ENCODE measurements at regions of chr1 and their contacts with region 1.

Region 1: DNA sequence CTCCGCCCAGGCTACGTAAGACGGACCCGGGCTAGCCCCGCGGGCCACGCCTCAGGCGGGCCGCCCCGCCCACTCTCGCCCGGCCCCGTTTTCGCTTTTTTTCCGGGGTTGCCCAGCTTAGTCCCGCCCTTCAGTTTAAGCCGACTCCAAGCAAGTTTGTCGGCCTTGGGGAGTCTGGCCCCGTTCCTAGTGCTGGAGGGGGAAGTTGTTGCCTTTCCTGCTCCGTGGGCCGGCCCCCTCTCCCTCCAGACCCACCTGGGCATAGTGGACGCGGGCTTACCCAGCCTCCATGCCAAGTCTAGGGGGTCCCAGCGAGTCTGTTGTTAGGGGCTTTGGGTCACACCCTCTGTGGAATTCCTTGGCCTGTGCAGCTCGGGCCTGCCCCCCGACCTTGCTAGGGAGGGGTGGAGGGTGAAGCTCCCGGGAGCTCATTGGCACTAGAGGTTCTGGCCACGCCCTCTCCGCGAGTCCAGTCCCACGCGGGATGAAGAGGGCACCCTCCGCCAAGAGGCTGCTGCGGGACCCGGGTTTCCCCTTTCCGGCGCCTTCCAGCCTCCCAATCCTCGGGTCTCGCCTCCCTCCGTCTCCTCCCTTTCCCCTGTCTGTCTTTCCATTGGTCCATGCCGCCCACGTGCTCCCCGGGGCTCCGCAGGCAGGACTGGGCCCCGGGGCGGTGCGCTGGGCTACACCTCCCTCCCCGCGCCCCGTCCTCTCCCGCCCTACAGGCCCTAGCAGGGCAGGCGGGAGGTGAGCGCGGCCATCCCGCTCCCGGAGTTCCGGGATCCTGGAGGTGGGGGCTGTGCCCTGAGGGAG is 3.3 kb downstream of the RUSC1 start:
- DNase-seq: peak; percentile 94 to 97 (median 95)
- ATAC-seq: peak; percentile 90
- H3K4me3 ChIP-seq: peak overlapping the region; percentile 60
- H3K27ac ChIP-seq: peak overlapping the region; percentile 68
- H3K4me1 ChIP-seq: peaks cover 17 to 67% of the 10 kb centered on the region in 2 experiments; a peak in 4 of 5 replicates
- H3K27me3 ChIP-seq: no peaks in the 10 kb centered on the region
- CTCF ChIP-seq: no peak
- EP300 ChIP-seq: no peak
- POLR2A ChIP-seq: peak; percentile 78
- RAD21 ChIP-seq: no peak

Region 2: GRCh38 chr1:154809436-154810413 is 514.3 kb before region 1 on chr1:
- CTCF ChIA-PET with region 1: no interaction called
- POLR2A ChIA-PET with region 1: no interaction called
- in situ Hi-C with region 1: no loop called
- intact Hi-C with region 1: no loop called
- DNase-seq: no peak
- ATAC-seq: no peak
- H3K4me3 ChIP-seq: no peak overlapping the region
- H3K27ac ChIP-seq: no peak overlapping the region
- H3K4me1 ChIP-seq: peaks cover 0 to 14% of the 10 kb centered on the region in 2 experiments; a peak in 1 of 5 replicates
- H3K27me3 ChIP-seq: peaks cover 88 to 90% of the 10 kb centered on the region in 2 experiments
- CTCF ChIP-seq: no peak
- EP300 ChIP-seq: no peak
- POLR2A ChIP-seq: no peak
- RAD21 ChIP-seq: no peak

Region 3: DNA sequence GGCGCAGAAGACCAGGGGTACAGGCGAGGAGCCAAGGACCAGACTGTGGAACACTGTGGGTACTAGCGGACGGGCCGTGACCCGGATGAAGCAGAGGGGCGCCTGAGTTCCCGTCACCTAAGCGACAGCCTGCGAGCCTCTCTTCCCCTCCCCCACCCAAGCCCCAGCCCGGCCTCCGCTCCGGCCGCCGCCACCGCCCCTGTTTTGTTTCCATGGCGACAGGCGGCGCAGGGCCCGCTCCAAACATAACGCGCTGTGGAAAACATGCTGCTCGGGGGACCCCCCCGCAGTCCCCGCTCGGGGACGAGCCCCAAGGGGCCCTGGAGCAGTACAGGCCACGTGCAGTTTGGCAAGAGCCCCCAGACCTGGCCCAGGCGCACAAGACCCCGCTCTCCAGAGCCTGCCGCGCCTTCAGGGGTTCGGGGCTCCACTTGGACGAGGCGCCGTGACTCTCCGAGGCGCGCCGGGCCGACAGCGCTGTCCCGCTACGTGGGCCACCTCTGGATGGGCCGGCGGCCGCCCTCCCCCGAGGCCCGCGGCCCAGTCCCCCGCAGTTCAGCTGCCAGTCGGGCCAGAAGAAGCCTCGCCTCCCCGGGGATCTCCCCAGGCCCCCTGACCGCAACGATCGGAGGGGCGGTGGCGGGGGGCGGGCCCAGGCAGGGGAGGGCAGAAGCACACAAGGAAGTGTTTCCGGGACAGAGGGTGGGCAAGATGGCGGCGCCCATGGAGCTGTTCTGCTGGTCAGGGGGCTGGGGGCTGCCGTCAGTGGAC is 115.3 kb before region 1 on chr1 and contains the start of gene MTX1:
- CTCF ChIA-PET with region 1: interaction called, 3 read pairs
- POLR2A ChIA-PET with region 1: interaction called, 3 read pairs
- in situ Hi-C with region 1: no loop called
- intact Hi-C with region 1: loop called (anchors 1 kb)
- DNase-seq: peak; percentile 90 to 95 (median 92)
- ATAC-seq: peak; percentile 93
- H3K4me3 ChIP-seq: peak within 1 kb of the TSS; percentile 100
- H3K27ac ChIP-seq: peak within 1 kb of the TSS; percentile 97
- H3K4me1 ChIP-seq: peaks cover 19 to 30% of the 10 kb centered on the region in 2 experiments
- H3K27me3 ChIP-seq: no peaks in the 10 kb centered on the region
- CTCF ChIP-seq: no peak
- EP300 ChIP-seq: peak; percentile 11; the same call in 1 of the 2 replicates
- POLR2A ChIP-seq: peak; percentile 76
- RAD21 ChIP-seq: no peak
- polyA plus RNA-seq, gene MTX1: 29.1 to 66.3 TPM

Region 4: GRCh38 chr1:155250633-155251449 is 73.2 kb before region 1 on chr1:
- CTCF ChIA-PET with region 1: interaction called, 38 read pairs
- POLR2A ChIA-PET with region 1: interaction called, 30 read pairs
- in situ Hi-C with region 1: no loop called
- intact Hi-C with region 1: loop called (anchors 1 kb)
- DNase-seq: peak; percentile 92 to 97 (median 94)
- ATAC-seq: peak; percentile 94
- H3K4me3 ChIP-seq: no peak overlapping the region
- H3K27ac ChIP-seq: peak overlapping the region; percentile 60; the same call in 1 of the 3 replicates
- H3K4me1 ChIP-seq: peaks cover 25 to 51% of the 10 kb centered on the region in 2 experiments
- H3K27me3 ChIP-seq: no peaks in the 10 kb centered on the region
- CTCF ChIP-seq: peak; percentile 100
- EP300 ChIP-seq: peak; percentile 42; the same call in 1 of the 2 replicates
- POLR2A ChIP-seq: no peak
- RAD21 ChIP-seq: peak; percentile 93 to 97

Region 5: GRCh38 chr1:155277070-155277895 is 46.7 kb before region 1 on chr1 and contains the start of gene HCN3:
- CTCF ChIA-PET with region 1: interaction called, 12 read pairs
- POLR2A ChIA-PET with region 1: interaction called, 4 read pairs
- in situ Hi-C with region 1: no loop called
- intact Hi-C with region 1: loop called (anchors 1 kb)
- DNase-seq: peak; percentile 97 to 99 (median 98)
- ATAC-seq: peak; percentile 83
- H3K4me3 ChIP-seq: peak within 1 kb of the TSS; percentile 57
- H3K27ac ChIP-seq: peak within 1 kb of the TSS; percentile 55
- H3K4me1 ChIP-seq: peaks cover 21 to 39% of the 10 kb centered on the region in 2 experiments; a peak in 4 of 5 replicates
- H3K27me3 ChIP-seq: no peaks in the 10 kb centered on the region
- CTCF ChIP-seq: peak; percentile 62 to 85 (median 74)
- EP300 ChIP-seq: no peak
- POLR2A ChIP-seq: 0 out of 2 replicates have a peak, but pooled peaks have one; percentile 26
- RAD21 ChIP-seq: peak; percentile 64 to 82
- polyA plus RNA-seq, gene HCN3: 0.91 to 1.0 TPM

Region 6: DNA sequence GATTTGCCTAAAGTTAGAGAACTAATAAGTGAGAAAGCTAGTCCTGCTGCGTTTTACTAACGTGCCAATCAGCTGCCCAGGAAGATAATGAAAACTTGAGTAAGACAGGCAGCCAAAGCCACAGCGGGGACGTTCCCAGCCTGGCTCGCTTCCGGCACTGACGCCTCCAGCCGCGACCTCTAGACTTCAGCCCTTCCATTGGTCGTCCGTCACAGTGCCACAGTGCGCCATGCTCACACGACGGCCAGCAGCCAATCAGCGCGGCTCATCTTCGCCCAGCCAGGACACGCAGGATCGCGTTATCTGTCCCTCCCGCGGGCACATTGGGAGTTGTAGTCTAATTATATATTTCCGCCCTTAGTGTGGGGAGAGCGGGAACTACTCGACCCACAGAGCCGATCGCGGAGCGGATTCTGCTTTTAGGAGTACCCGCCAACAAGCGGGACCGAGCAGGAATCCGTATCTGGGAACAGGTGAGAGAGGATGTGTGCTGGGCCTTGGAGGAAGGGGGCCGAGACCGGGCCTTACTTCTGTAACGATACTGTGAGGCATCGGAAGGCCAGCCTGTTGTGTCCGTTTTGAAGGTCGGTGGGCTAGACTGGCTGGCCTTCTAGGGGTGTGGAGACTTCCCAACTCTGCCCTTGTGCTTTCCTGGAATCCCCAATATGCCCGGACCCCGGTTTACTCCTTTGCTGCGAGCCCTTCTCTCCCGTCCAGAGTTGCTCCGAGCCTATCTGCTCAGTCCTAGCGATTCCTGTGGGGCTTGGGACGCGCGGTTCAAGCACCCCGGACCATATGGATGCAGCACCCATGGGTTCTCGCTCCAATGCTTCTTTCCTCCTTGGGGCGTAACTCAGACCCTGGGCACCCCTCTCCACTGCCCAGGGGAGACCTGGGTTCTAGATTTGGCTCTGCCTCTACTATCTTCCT is 15.2 kb before region 1 on chr1 and contains the start of gene FDPS:
- CTCF ChIA-PET with region 1: no interaction called
- POLR2A ChIA-PET with region 1: interaction called, 4 read pairs
- in situ Hi-C with region 1: no loop called
- intact Hi-C with region 1: loop called (anchors 2 kb)
- DNase-seq: peak; percentile 97 to 100 (median 98)
- ATAC-seq: peak; percentile 97
- H3K4me3 ChIP-seq: peak within 1 kb of the TSS; percentile 75
- H3K27ac ChIP-seq: peak within 1 kb of the TSS; percentile 93
- H3K4me1 ChIP-seq: peaks cover 23 to 35% of the 10 kb centered on the region in 2 experiments; a peak in 4 of 5 replicates
- H3K27me3 ChIP-seq: no peaks in the 10 kb centered on the region
- CTCF ChIP-seq: 0 out of 6 replicates have a peak, but pooled peaks of 1 of the 3 experiments have one; percentile 1
- EP300 ChIP-seq: no peak
- POLR2A ChIP-seq: peak; percentile 89
- RAD21 ChIP-seq: no peak
- polyA plus RNA-seq, gene FDPS: 864 to 884 TPM

Region 7: DNA sequence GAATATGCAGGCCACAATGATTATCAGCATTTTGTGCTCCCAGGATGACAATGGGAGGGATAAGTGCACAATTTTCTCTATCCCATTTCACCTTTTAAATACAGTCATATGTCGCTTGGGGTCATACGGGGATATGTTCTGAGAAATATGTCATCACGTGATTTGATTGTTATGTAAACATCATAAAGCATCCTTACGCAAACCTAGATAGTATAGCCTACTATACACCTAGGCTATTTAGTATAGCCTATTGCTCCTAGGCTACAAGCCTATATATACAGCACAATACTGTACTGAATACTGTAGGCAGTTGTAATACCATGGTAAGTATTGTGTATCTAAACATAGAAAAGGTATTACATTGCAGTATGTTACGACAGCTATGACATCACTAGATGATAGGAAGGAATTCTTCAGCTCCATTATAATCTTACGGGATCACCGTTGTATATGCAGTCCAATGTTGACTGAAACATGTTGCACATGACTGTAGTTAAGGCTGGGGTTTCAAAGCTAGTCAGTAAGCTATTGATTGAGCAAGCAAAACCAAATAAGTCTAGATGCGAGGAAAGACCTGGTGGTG is 15.6 kb after region 1 on chr1:
- CTCF ChIA-PET with region 1: no interaction called
- POLR2A ChIA-PET with region 1: interaction called, 10 read pairs
- in situ Hi-C with region 1: no loop called
- intact Hi-C with region 1: no loop called
- DNase-seq: no peak
- ATAC-seq: no peak
- H3K4me3 ChIP-seq: no peak overlapping the region
- H3K27ac ChIP-seq: no peak overlapping the region
- H3K4me1 ChIP-seq: no peaks in the 10 kb centered on the region
- H3K27me3 ChIP-seq: no peaks in the 10 kb centered on the region
- CTCF ChIP-seq: no peak
- EP300 ChIP-seq: no peak
- POLR2A ChIP-seq: no peak
- RAD21 ChIP-seq: no peak

Region 8: GRCh38 chr1:155569988-155570592 is 246.1 kb after region 1 on chr1:
- CTCF ChIA-PET with region 1: no interaction called
- POLR2A ChIA-PET with region 1: no interaction called
- in situ Hi-C with region 1: no loop called
- intact Hi-C with region 1: no loop called
- DNase-seq: peak; percentile 34 to 39 (median 37)
- ATAC-seq: peak; percentile 55
- H3K4me3 ChIP-seq: no peak overlapping the region
- H3K27ac ChIP-seq: peak overlapping the region; percentile 6; the same call in 1 of the 3 replicates
- H3K4me1 ChIP-seq: peaks cover under 1 to 12% of the 10 kb centered on the region in 2 experiments; a peak in 4 of 5 replicates
- H3K27me3 ChIP-seq: no peaks in the 10 kb centered on the region
- CTCF ChIP-seq: no peak
- EP300 ChIP-seq: no peak
- POLR2A ChIP-seq: no peak
- RAD21 ChIP-seq: no peak

Region 9: GRCh38 chr1:155591770-155592169 is 267.8 kb after region 1 on chr1:
- CTCF ChIA-PET with region 1: no interaction called
- POLR2A ChIA-PET with region 1: no interaction called
- in situ Hi-C with region 1: no loop called
- intact Hi-C with region 1: loop called (anchors 10 kb)
- DNase-seq: peak; percentile 31 to 78 (median 40)
- ATAC-seq: peak; percentile 89
- H3K4me3 ChIP-seq: no peak overlapping the region
- H3K27ac ChIP-seq: no peak overlapping the region
- H3K4me1 ChIP-seq: no peaks in the 10 kb centered on the region; a peak in 1 of 5 replicates
- H3K27me3 ChIP-seq: no peaks in the 10 kb centered on the region
- CTCF ChIP-seq: peak; percentile 44 to 79 (median 62); a peak in 5 of 6 replicates
- EP300 ChIP-seq: no peak
- POLR2A ChIP-seq: no peak
- RAD21 ChIP-seq: peak; percentile 68 to 72